Transverse colon (tissue), 4 donors: ENCODE measurements at regions of chr4 and their contacts with region 1.

Region 1: DNA sequence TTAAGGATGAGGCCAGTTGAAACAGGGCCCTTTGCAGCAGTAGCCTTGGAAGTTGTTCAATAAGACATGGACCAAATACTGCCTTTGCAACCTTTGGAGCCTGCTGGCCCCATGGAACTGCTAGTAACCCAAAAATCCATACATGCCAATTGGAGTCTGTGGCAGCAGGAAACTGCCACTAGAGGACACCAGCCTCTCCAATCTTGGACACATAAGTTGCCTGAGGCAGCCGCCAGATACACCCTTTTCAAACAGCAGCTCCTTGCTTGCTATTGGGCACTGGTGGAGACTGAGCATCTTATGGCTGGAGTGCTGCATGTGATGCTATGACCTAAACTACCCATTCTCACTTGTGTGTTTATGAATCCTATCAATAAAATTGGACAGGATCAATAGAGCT is 14.8 kb upstream of the LAP3 start:
- DNase-seq: no peak
- H3K4me3 ChIP-seq: no peak overlapping the region
- H3K27ac ChIP-seq: no peak overlapping the region
- H3K4me1 ChIP-seq: no peaks in the 10 kb centered on the region
- H3K27me3 ChIP-seq: no peaks in the 10 kb centered on the region
- CTCF ChIP-seq: no peak
- EP300 ChIP-seq: no peak
- POLR2A ChIP-seq: no peak

Region 2: GRCh38 chr4:17112292-17112659 is 449.9 kb before region 1 on chr4:
- in situ Hi-C with region 1: no loop called
- intact Hi-C with region 1: no loop called
- DNase-seq: no peak
- H3K4me3 ChIP-seq: no peak overlapping the region
- H3K27ac ChIP-seq: no peak overlapping the region
- H3K4me1 ChIP-seq: no peaks in the 10 kb centered on the region
- H3K27me3 ChIP-seq: no peaks in the 10 kb centered on the region
- CTCF ChIP-seq: peak in 1 of 5 experiments; percentile 19
- EP300 ChIP-seq: no peak
- POLR2A ChIP-seq: no peak

Region 3: GRCh38 chr4:17636696-17637622 is 74.8 kb after region 1 on chr4:
- in situ Hi-C with region 1: loop called in 1 of 4 experiments (anchors 5 kb)
- intact Hi-C with region 1: no loop called
- DNase-seq: peak; percentile 77
- H3K4me3 ChIP-seq: no peak overlapping the region
- H3K27ac ChIP-seq: no peak overlapping the region
- H3K4me1 ChIP-seq: no peaks in the 10 kb centered on the region
- H3K27me3 ChIP-seq: no peaks in the 10 kb centered on the region
- CTCF ChIP-seq: peak; percentile 75 to 93 (median 90)
- EP300 ChIP-seq: no peak
- POLR2A ChIP-seq: no peak

Region 4: DNA sequence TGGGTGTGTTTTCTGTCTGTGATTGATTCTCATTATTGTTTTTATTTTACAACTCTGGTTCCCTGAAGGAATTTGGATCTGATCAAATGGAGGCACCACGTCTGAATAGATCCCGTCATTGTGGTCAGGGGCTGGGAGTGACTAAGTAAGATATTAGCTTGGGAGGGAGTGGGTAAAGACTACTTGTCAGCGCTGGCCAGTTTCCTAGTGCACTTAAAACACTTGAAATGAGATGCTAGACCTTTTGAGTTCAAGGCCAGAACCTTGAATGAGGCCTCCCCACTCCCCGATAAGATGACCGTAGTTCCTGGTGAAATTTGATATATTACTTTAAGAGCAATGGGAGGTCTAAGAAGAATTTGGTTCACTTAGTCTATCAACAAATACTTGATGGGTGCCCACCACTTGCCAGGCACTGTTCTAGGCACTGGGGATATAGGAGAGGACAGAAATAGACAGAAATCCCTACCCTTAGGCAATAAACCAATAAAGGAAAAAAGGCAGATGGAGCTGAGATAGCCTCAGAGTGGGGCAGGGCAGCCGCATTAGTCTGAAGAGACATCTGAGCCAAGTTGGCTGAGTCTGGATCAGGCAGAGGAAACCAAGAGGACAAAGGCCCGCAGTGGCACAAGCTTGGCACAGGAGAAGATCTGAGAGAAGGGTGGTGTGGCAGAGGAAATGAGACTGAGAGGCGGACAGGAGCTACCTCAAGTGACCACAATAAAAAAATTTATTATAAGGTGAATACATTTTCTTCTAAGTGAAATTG is 207.4 kb after region 1 on chr4:
- in situ Hi-C with region 1: no loop called
- intact Hi-C with region 1: no loop called
- DNase-seq: no peak
- H3K4me3 ChIP-seq: no peak overlapping the region
- H3K27ac ChIP-seq: no peak overlapping the region
- H3K4me1 ChIP-seq: no peaks in the 10 kb centered on the region
- H3K27me3 ChIP-seq: no peaks in the 10 kb centered on the region
- CTCF ChIP-seq: no peak
- EP300 ChIP-seq: no peak
- POLR2A ChIP-seq: no peak

Region 5: DNA sequence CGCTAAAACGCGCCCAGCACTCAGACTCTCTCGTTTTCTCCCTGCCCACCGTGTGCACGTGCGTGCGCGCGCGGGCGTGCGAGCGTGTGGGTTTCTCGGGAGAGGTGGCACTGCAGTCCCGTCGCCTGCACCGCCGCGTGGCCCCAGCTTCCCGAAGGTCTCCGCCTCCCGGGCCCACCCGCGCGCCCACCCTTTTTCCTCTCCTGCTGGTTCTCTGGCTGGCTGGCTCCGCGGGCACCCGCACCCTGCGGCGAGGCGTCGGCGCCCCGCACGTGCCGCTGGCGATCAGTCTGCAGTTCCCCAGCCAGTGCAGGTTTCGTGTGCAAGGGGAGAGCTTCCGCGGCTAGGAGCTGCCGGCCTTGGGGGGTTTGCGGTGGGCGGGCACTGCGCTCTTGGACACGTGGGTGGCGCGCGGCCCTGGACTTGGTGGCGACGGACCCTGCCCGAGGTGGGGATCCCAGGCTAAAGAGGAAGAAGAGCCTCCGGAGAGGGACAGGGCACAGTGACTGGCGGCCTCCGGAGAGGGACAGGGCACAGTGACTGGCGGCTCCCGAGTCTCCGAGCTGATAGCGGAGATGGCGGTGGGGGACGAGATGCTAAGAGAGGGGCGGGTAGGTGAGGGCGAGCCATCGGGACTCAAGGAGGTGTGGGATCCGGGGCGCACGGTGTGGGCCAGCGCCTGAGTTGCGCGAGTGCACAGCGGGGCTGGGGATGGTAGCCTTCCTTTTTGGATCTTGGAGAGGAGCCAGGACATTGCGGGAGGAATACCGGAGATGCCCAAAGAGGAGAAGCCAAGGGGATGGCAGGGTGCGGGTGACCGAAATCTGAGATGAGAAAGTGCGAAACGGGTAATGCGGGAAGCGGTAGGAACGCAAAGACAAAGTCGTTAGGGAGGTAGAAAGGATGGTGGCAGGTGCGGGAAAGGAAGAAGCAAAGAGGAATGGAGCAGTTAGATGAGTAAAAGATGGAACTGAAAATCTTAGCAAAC is 219.4 kb after region 1 on chr4 and contains the start of gene FAM184B:
- in situ Hi-C with region 1: loop called in 1 of 4 experiments (anchors 25 kb)
- intact Hi-C with region 1: no loop called
- DNase-seq: no peak
- H3K4me3 ChIP-seq: peak within 1 kb of the TSS in 3 of 4 donors; percentile 16 to 49 (median 25)
- H3K27ac ChIP-seq: no peak within 1 kb of the TSS
- H3K4me1 ChIP-seq: peaks cover 0 to 15% (median 14%) of the 10 kb centered on the region in 4 donors
- H3K27me3 ChIP-seq: peaks cover 52% of the 10 kb centered on the region
- CTCF ChIP-seq: no peak
- EP300 ChIP-seq: no peak
- POLR2A ChIP-seq: no peak
- total RNA-seq, gene FAM184B: 0.14 to 0.75 (median 0.18) TPM

Region 6: GRCh38 chr4:18021722-18022571 is 459.8 kb after region 1 on chr4 and contains the start of gene LCORL:
- in situ Hi-C with region 1: loop called in 1 of 4 experiments (anchors 25 kb)
- intact Hi-C with region 1: no loop called
- DNase-seq: peak; percentile 93
- H3K4me3 ChIP-seq: peak within 1 kb of the TSS; percentile 83 to 92 (median 87)
- H3K27ac ChIP-seq: peak within 1 kb of the TSS; percentile 94 to 98 (median 96)
- H3K4me1 ChIP-seq: peaks cover 8 to 21% (median 10%) of the 10 kb centered on the region in 4 donors
- H3K27me3 ChIP-seq: no peaks in the 10 kb centered on the region
- CTCF ChIP-seq: peak in 4 of 5 experiments; percentile 3 to 41 (median 18)
- EP300 ChIP-seq: no peak
- POLR2A ChIP-seq: no peak
- total RNA-seq, gene LCORL: 14.7 to 162 (median 28.5) TPM

Region 7: GRCh38 chr4:18593445-18594002 is 1031.4 kb after region 1 on chr4:
- in situ Hi-C with region 1: loop called in 1 of 4 experiments (anchors 25 kb)
- intact Hi-C with region 1: no loop called
- DNase-seq: peak; percentile 47
- H3K4me3 ChIP-seq: peak overlapping the region in 1 of 4 donors; percentile 5
- H3K27ac ChIP-seq: no peak overlapping the region
- H3K4me1 ChIP-seq: peaks cover 0 to 7% (median 2%) of the 10 kb centered on the region in 4 donors
- H3K27me3 ChIP-seq: no peaks in the 10 kb centered on the region
- CTCF ChIP-seq: peak; percentile 71 to 80 (median 74)
- EP300 ChIP-seq: no peak
- POLR2A ChIP-seq: no peak